CD4-positive, alpha-beta T cell (primary cell): ENCODE measurements at regions of chr9 and their contacts with region 1.

Region 1: GRCh38 chr9:76302947-76303940 is 91.0 kb downstream of the RFK start:
- DNase-seq: peak in 5 of 14 experiments; percentile 3 to 68 (median 53)
- ATAC-seq: peak; percentile 48
- H3K4me3 ChIP-seq: no peak overlapping the region
- H3K4me3 Mint-ChIP-seq: no peak overlapping the region
- H3K27ac ChIP-seq: no peak overlapping the region
- H3K27ac Mint-ChIP-seq: no peak overlapping the region
- H3K4me1 ChIP-seq: no peaks in the 10 kb centered on the region
- H3K4me1 Mint-ChIP-seq: no peaks in the 10 kb centered on the region
- H3K27me3 ChIP-seq: peaks cover 0 to 5% of the 10 kb centered on the region in 2 experiments
- H3K27me3 Mint-ChIP-seq: peaks cover 11% of the 10 kb centered on the region
- CTCF ChIP-seq: peak; percentile 71

Region 2: GRCh38 chr9:74773886-74774479 is 1529.3 kb before region 1 on chr9:
- CTCF ChIA-PET with region 1: no interaction called
- POLR2A ChIA-PET with region 1: no interaction called
- intact Hi-C with region 1: loop called (anchors 5 to 10 kb)
- DNase-seq: peak; percentile 44 to 83 (median 60)
- ATAC-seq: peak; percentile 79
- H3K4me3 ChIP-seq: no peak overlapping the region
- H3K4me3 Mint-ChIP-seq: no peak overlapping the region
- H3K27ac ChIP-seq: no peak overlapping the region
- H3K27ac Mint-ChIP-seq: no peak overlapping the region
- H3K4me1 ChIP-seq: no peaks in the 10 kb centered on the region
- H3K4me1 Mint-ChIP-seq: no peaks in the 10 kb centered on the region
- H3K27me3 ChIP-seq: peaks cover 6 to 7% of the 10 kb centered on the region in 2 experiments
- H3K27me3 Mint-ChIP-seq: peaks cover 18% of the 10 kb centered on the region
- CTCF ChIP-seq: peak; percentile 93

Region 3: DNA sequence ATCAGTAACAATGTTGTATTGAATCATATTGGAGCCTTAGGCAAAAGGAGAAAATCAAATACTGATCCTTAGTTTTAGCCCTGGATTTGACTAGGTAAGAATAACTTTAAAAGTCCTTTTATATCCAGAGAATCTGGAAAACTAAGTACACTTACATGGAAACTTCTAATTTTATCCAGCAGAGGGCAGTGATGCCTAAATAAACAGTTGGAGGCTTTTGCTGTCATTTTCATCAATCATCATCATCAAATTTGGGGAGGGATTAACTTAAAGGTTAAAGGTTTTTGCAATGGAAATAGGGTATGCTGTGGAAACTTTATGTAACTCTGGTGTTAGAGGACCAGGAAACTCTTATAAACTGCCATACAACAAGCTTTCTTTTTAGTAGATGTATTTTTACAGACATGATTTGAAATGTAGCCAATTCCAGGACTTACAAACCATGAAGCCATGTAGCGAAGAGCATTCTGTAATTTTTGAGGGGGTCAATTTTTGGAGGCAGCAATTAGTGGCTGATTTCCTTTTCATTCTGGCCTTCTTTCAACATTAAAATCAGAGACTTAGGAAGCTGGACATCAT is 1102.3 kb before region 1 on chr9:
- CTCF ChIA-PET with region 1: interaction called, 3 read pairs
- POLR2A ChIA-PET with region 1: no interaction called
- intact Hi-C with region 1: loop called (anchors 2 kb)
- DNase-seq: peak in 3 of 14 experiments; percentile 59 to 66 (median 64)
- ATAC-seq: no peak
- H3K4me3 ChIP-seq: no peak overlapping the region
- H3K4me3 Mint-ChIP-seq: no peak overlapping the region
- H3K27ac ChIP-seq: no peak overlapping the region
- H3K27ac Mint-ChIP-seq: no peak overlapping the region
- H3K4me1 ChIP-seq: no peaks in the 10 kb centered on the region
- H3K4me1 Mint-ChIP-seq: no peaks in the 10 kb centered on the region
- H3K27me3 ChIP-seq: no peaks in the 10 kb centered on the region
- H3K27me3 Mint-ChIP-seq: no peaks in the 10 kb centered on the region
- CTCF ChIP-seq: peak; percentile 73

Region 4: DNA sequence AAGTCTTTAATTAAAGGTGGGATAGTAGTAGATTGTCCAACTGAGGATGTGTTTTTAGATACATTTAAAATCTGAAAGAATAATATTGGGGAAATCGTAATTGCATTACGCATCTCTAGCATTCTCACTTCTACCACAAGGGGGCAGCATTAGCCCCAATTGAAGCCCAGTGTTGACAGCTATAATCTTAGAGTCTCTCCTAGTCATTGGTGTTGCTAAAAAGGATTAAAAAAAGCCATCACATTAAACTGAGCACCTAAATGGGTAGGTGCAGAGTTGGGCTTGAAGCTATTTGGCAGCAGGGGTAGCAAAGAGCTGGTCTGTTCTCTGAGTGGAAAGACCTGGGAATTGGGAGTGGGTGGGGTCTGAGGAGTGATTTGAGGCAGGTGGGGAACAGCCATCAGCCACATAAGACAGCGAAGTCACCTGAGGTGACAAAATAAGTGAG is 1037.7 kb before region 1 on chr9:
- CTCF ChIA-PET with region 1: interaction called, 12 read pairs
- POLR2A ChIA-PET with region 1: no interaction called
- intact Hi-C with region 1: loop called (anchors 2 kb)
- DNase-seq: peak in 13 of 14 experiments; percentile 1 to 69 (median 30)
- ATAC-seq: peak; percentile 62
- H3K4me3 ChIP-seq: no peak overlapping the region
- H3K4me3 Mint-ChIP-seq: no peak overlapping the region
- H3K27ac ChIP-seq: no peak overlapping the region
- H3K27ac Mint-ChIP-seq: no peak overlapping the region
- H3K4me1 ChIP-seq: no peaks in the 10 kb centered on the region
- H3K4me1 Mint-ChIP-seq: no peaks in the 10 kb centered on the region
- H3K27me3 ChIP-seq: no peaks in the 10 kb centered on the region
- H3K27me3 Mint-ChIP-seq: no peaks in the 10 kb centered on the region
- CTCF ChIP-seq: peak; percentile 97

Region 5: DNA sequence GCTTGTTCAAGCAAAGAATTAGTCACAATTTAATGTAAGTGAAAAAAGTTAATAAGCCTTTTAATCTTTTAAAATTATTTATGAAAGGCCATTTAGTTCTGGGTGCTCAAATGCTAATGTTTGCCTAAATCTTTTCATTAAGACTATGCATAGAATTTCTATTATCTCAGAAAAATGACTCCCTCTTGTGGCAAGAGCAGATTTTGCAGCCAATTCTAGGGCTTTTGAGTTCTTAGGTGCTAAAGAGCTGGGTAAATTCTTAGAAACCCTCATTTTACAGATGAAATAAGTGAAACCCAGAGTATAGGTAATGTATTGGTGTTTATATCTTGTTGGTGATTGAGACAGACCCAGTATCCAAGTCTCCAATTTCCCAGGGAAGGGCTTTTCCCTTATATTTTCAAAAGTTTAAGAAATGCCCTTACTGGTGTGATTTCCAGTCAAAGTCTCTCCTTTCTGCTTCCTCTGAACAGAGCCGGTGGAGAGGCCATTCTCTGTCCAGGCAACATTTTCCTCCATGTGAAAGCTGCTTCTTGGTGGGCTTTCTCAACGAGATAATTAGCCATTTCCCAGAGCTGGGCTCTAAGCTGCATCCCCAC is 436.9 kb before region 1 on chr9:
- CTCF ChIA-PET with region 1: no interaction called
- POLR2A ChIA-PET with region 1: no interaction called
- intact Hi-C with region 1: loop called (anchors 5 kb)
- DNase-seq: peak in 10 of 14 experiments; percentile 7 to 67 (median 31)
- ATAC-seq: no peak
- H3K4me3 ChIP-seq: no peak overlapping the region
- H3K4me3 Mint-ChIP-seq: no peak overlapping the region
- H3K27ac ChIP-seq: no peak overlapping the region
- H3K27ac Mint-ChIP-seq: no peak overlapping the region
- H3K4me1 ChIP-seq: no peaks in the 10 kb centered on the region
- H3K4me1 Mint-ChIP-seq: peaks cover 19% of the 10 kb centered on the region
- H3K27me3 ChIP-seq: no peaks in the 10 kb centered on the region
- H3K27me3 Mint-ChIP-seq: no peaks in the 10 kb centered on the region
- CTCF ChIP-seq: peak; percentile 83

Region 6: DNA sequence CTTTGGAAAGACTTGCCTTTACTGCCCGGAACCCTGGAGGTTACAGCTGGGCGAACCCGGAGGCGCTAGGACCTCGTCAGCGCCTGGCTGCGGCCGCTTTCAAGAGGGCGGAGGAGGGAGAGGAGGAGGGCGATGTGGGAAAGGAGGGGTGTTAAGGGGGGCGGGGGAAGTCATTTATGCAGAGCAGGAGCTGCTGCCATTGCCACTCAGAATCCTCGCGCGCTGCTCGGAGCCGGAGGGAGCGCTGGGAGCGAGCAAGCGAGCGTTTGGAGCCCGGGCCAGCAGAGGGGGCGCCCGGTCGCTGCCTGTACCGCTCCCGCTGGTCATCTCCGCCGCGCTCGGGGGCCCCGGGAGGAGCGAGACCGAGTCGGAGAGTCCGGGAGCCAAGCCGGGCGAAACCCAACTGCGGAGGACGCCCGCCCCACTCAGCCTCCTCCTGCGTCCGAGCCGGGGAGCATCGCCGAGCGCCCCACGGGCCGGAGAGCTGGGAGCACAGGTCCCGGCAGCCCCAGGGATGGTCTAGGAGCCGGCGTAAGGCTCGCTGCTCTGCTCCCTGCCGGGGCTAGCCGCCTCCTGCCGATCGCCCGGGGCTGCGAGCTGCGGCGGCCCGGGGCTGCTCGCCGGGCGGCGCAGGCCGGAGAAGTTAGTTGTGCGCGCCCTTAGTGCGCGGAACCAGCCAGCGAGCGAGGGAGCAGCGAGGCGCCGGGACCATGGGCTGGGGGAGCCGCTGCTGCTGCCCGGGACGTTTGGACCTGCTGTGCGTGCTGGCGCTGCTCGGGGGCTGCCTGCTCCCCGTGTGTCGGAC is 412.6 kb before region 1 on chr9 and contains the start of gene PCSK5:
- CTCF ChIA-PET with region 1: no interaction called
- POLR2A ChIA-PET with region 1: no interaction called
- intact Hi-C with region 1: loop called in 1 of 2 experiments (anchors 5 kb)
- DNase-seq: peak; percentile 69 to 92 (median 81)
- ATAC-seq: peak; percentile 91
- H3K4me3 ChIP-seq: peak within 1 kb of the TSS; percentile 76
- H3K4me3 Mint-ChIP-seq: peak within 1 kb of the TSS; percentile 93
- H3K27ac ChIP-seq: peak within 1 kb of the TSS; percentile 11 to 63
- H3K27ac Mint-ChIP-seq: peak within 1 kb of the TSS; percentile 83
- H3K4me1 ChIP-seq: peaks cover 33% of the 10 kb centered on the region
- H3K4me1 Mint-ChIP-seq: peaks cover 50% of the 10 kb centered on the region
- H3K27me3 ChIP-seq: no peaks in the 10 kb centered on the region
- H3K27me3 Mint-ChIP-seq: no peaks in the 10 kb centered on the region
- CTCF ChIP-seq: no peak
- total RNA-seq, gene PCSK5: 14.4 to 15.2 TPM

Region 7: GRCh38 chr9:76023715-76024195 is 279.5 kb before region 1 on chr9:
- CTCF ChIA-PET with region 1: no interaction called
- POLR2A ChIA-PET with region 1: no interaction called
- intact Hi-C with region 1: loop called (anchors 5 to 10 kb)
- DNase-seq: peak; percentile 11 to 86 (median 40)
- ATAC-seq: peak; percentile 90
- H3K4me3 ChIP-seq: peak overlapping the region; percentile 39
- H3K4me3 Mint-ChIP-seq: peak overlapping the region; percentile 79
- H3K27ac ChIP-seq: peak overlapping the region; percentile 51 to 64
- H3K27ac Mint-ChIP-seq: peak overlapping the region; percentile 93
- H3K4me1 ChIP-seq: peaks cover 56% of the 10 kb centered on the region
- H3K4me1 Mint-ChIP-seq: peaks cover 100% of the 10 kb centered on the region
- H3K27me3 ChIP-seq: no peaks in the 10 kb centered on the region
- H3K27me3 Mint-ChIP-seq: no peaks in the 10 kb centered on the region
- CTCF ChIP-seq: no peak

Region 8: GRCh38 chr9:76271755-76272154 is 31.5 kb before region 1 on chr9:
- CTCF ChIA-PET with region 1: no interaction called
- POLR2A ChIA-PET with region 1: no interaction called
- intact Hi-C with region 1: no loop called
- DNase-seq: no peak
- ATAC-seq: no peak
- H3K4me3 ChIP-seq: no peak overlapping the region
- H3K4me3 Mint-ChIP-seq: no peak overlapping the region
- H3K27ac ChIP-seq: no peak overlapping the region
- H3K27ac Mint-ChIP-seq: no peak overlapping the region
- H3K4me1 ChIP-seq: no peaks in the 10 kb centered on the region
- H3K4me1 Mint-ChIP-seq: no peaks in the 10 kb centered on the region
- H3K27me3 ChIP-seq: no peaks in the 10 kb centered on the region
- H3K27me3 Mint-ChIP-seq: no peaks in the 10 kb centered on the region
- CTCF ChIP-seq: no peak